ENCODE measurements at regions of chr4 and their contacts with region 1.

Region 1: GRCh38 chr4:80202190-80202711 is 4.9 kb downstream of the PRDM8 start:
- DNase-seq: peak; percentile 86
- H3K4me3 Mint-ChIP-seq: peak overlapping the region; percentile 73
- H3K27ac Mint-ChIP-seq: peak overlapping the region; percentile 78
- H3K4me1 Mint-ChIP-seq: peaks cover 22% of the 10 kb centered on the region
- H3K27me3 Mint-ChIP-seq: peaks cover 6% of the 10 kb centered on the region

Region 2: GRCh38 chr4:79917246-79917645 is 285.0 kb before region 1 on chr4:
- CTCF ChIA-PET with region 1: interaction called, 7 read pairs
- POLR2A ChIA-PET with region 1: no interaction called
- intact Hi-C with region 1: loop called (anchors 5 kb)
- DNase-seq: peak; percentile 65
- H3K4me3 Mint-ChIP-seq: no peak overlapping the region
- H3K27ac Mint-ChIP-seq: no peak overlapping the region
- H3K4me1 Mint-ChIP-seq: peaks cover 20% of the 10 kb centered on the region
- H3K27me3 Mint-ChIP-seq: no peaks in the 10 kb centered on the region

Region 3: DNA sequence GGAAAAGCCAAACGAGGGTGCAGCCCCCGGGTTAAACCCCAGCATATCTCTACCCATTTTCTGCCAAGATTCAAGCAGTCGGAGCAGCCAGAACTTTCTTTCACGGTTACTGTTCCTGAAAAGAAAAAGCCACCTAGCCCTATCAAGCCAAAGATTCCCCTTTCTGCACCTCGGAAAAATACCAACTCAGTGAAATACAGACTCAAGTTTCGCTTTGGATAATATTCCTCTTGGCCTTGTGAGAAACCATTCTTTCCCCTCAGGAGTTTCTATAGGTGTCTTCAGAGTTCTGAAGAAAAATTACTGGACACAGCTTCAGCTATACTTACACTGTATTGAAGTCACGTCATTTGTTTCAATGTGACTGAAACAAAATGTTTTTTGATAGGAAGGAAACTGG is 84.2 kb after region 1 on chr4:
- CTCF ChIA-PET with region 1: no interaction called
- POLR2A ChIA-PET with region 1: no interaction called
- intact Hi-C with region 1: no loop called
- DNase-seq: no peak
- H3K4me3 Mint-ChIP-seq: no peak overlapping the region
- H3K27ac Mint-ChIP-seq: no peak overlapping the region
- H3K4me1 Mint-ChIP-seq: no peaks in the 10 kb centered on the region
- H3K27me3 Mint-ChIP-seq: peaks cover 7% of the 10 kb centered on the region